AG04449 (cell line): ENCODE measurements at regions of chr1 and their contacts with region 1.

Region 1: DNA sequence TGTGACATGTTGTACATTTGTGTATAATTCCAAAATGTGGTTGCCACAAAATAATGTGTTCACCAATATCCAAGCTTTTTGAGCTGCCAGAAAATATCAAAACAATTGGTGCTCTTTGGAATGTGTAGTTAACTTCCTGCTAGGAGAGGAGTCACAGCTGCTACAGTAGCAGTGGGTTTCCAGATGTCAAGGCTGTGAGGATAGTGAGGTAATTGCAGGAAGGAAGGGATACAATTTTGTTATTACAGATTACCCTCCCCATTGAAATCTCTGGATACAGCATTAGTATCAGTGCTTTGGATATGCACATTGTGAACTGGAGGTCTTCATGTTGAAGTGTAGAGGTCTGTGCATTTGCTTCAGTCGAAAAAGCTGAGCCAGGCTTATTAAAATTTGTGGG is 253.2 kb downstream of the PTPRC start:
- DNase-seq: no peak
- H3K4me3 ChIP-seq: no peak overlapping the region
- CTCF ChIP-seq: no peak

Region 2: GRCh38 chr1:198903203-198903602 is 11.1 kb after region 1 on chr1:
- CTCF ChIA-PET with region 1: interaction called, 41 read pairs
- POLR2A ChIA-PET with region 1: interaction called, 3 read pairs
- DNase-seq: no peak
- H3K4me3 ChIP-seq: no peak overlapping the region
- CTCF ChIP-seq: no peak